ENCODE measurements at regions of chr1 and their contacts with region 1.

Region 1: GRCh38 chr1:55140546-55140983 is 74.6 kb downstream of the USP24 start:
- DNase-seq: peak in 1 of 2 donors; percentile 33
- ATAC-seq: peak; percentile 91 to 97 (median 95)
- H3K4me3 ChIP-seq: no peak overlapping the region
- H3K27ac ChIP-seq: peak overlapping the region; percentile 53
- H3K4me1 ChIP-seq: peaks cover 6% of the 10 kb centered on the region
- H3K27me3 ChIP-seq: no peaks in the 10 kb centered on the region
- CTCF ChIP-seq: peak; percentile 87

Region 2: DNA sequence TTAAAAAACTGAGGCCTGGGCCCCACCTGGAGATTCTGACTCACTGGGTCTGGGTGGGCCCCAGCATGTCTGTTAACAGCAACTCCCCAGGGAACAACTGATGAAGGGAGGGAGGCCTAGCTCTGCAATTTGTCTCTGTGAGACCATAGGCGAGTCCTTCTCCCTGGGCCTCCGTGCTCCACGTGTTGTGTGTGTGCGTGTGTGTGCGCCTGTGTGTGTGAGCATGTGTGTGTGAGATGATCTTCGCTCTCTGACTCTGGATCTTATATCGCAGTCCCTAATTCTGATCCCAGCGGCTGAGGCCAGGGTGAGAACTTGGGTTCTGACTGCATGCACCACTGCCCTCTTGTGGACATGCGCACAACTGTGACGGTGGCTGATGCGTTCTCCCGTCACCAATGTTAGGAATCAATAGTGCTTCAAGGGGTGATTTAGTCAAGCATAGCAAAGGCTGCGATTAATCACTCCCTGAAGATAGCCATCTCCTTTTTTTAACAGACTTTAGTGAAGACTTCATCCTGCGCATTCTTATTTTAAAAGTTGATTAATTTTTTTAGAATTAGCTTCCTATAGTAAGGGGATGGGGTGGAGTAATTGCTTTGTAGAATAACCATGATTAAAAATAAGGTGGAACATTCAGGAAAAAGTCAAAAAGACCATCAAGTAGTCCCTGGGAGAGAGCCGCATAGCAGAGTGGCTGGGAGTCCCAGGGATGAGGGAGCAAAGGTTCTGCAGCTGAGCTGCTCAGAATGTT is 137.0 kb after region 1 on chr1:
- intact Hi-C with region 1: loop called (anchors 1 to 5 kb)
- DNase-seq: peak; percentile 79 to 89
- ATAC-seq: peak; percentile 87 to 93 (median 90)
- H3K4me3 ChIP-seq: no peak overlapping the region
- H3K27ac ChIP-seq: peak overlapping the region; percentile 71
- H3K4me1 ChIP-seq: peaks cover 21% of the 10 kb centered on the region
- H3K27me3 ChIP-seq: no peaks in the 10 kb centered on the region
- CTCF ChIP-seq: peak; percentile 94